ENCODE measurements at regions of chr7 and their contacts with region 1.

Region 1: DNA sequence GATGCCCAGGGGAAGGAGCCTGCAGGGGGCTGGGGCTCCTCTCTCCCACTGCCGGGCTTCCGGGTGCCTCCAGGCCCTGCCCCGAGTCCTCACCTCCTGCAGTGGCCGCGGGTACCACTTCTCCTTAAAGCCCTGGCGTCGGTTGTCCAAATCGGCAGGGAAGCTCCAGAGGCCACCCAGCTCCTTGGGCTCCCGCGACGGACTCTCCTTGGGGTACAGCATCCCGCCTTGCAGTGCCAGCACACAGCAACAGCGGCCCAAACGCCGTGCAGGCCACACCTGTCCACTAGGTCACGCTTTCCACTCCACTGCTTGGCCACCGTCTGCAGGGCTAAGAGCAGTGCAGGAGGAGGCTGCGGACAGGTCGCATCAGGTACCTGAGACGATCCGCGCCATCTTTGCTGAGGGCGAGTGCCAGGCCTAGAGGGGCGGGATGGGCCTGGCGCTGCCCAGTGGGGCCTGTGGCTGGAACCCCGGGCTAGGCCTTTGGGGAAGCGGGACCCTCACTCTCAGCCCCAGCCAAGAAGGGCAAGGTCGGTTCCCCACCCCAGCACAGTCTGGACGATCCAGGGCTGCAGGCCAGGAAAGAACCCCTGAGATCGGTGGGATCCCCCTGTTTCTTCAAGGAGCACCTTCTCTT is 47.7 kb upstream of the ZNF479 start:
- DNase-seq: peak in 1 of 2 donors; percentile 46
- H3K4me3 ChIP-seq: no peak overlapping the region
- H3K27ac ChIP-seq: no peak overlapping the region
- H3K4me1 ChIP-seq: no peaks in the 10 kb centered on the region
- H3K27me3 ChIP-seq: no peaks in the 10 kb centered on the region
- CTCF ChIP-seq: no peak
- POLR2A ChIP-seq: no peak

Region 2: GRCh38 chr7:55838595-55838994 is 1341.3 kb before region 1 on chr7:
- intact Hi-C with region 1: loop called (anchors 10 kb)
- DNase-seq: no peak
- H3K4me3 ChIP-seq: no peak overlapping the region
- H3K27ac ChIP-seq: no peak overlapping the region
- H3K4me1 ChIP-seq: no peaks in the 10 kb centered on the region
- H3K27me3 ChIP-seq: no peaks in the 10 kb centered on the region
- CTCF ChIP-seq: no peak
- POLR2A ChIP-seq: no peak